Activated CD4-positive, alpha-beta memory T cell treated with anti-CD3 and anti-CD28 coated beads for 36 hours (primary cell): ENCODE measurements at regions of chr14 and their contacts with region 1.

Region 1: GRCh38 chr14:22589096-22589839 is at the start of gene DAD1:
- DNase-seq: peak; percentile 100
- H3K4me3 Mint-ChIP-seq: peak within 1 kb of the TSS; percentile 99
- H3K27ac Mint-ChIP-seq: peak within 1 kb of the TSS; percentile 100
- H3K4me1 Mint-ChIP-seq: peaks cover 64% of the 10 kb centered on the region
- H3K27me3 Mint-ChIP-seq: peaks cover 5% of the 10 kb centered on the region
- total RNA-seq, gene DAD1: 292 to 305 TPM

Region 2: GRCh38 chr14:22653012-22653621 is 63.8 kb after region 1 on chr14:
- CTCF ChIA-PET with region 1: interaction called, 28 read pairs
- POLR2A ChIA-PET with region 1: interaction called, 4 read pairs
- intact Hi-C with region 1: loop called (anchors 5 kb)
- DNase-seq: peak; percentile 66
- H3K4me3 Mint-ChIP-seq: no peak overlapping the region
- H3K27ac Mint-ChIP-seq: no peak overlapping the region
- H3K4me1 Mint-ChIP-seq: no peaks in the 10 kb centered on the region
- H3K27me3 Mint-ChIP-seq: no peaks in the 10 kb centered on the region

Region 3: DNA sequence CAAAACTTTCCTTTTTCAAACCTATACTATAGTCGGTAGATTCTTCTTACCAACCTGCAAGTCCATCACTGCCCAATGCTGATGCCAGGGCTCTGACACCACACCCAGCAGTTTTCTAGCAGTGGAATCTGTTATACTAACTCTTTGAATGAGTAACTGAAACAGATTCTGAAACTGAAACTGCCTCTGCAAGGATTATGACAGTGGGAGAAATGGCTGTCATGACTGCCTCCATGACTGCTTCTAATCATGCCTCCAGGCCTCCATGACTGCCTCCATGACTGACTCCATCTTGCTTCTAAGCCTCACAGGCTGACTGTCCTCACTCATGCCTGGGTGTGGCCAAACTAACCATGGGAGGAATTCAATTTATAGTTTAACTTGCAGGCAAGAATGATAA is 147.8 kb after region 1 on chr14:
- CTCF ChIA-PET with region 1: no interaction called
- POLR2A ChIA-PET with region 1: no interaction called
- intact Hi-C with region 1: loop called (anchors 1 kb)
- DNase-seq: peak; percentile 76
- H3K4me3 Mint-ChIP-seq: no peak overlapping the region
- H3K27ac Mint-ChIP-seq: peak overlapping the region; percentile 63
- H3K4me1 Mint-ChIP-seq: peaks cover 16% of the 10 kb centered on the region
- H3K27me3 Mint-ChIP-seq: no peaks in the 10 kb centered on the region

Region 4: GRCh38 chr14:23621204-23621931 is 1032.1 kb after region 1 on chr14:
- CTCF ChIA-PET with region 1: no interaction called
- POLR2A ChIA-PET with region 1: no interaction called
- intact Hi-C with region 1: no loop called
- DNase-seq: no peak
- H3K4me3 Mint-ChIP-seq: no peak overlapping the region
- H3K27ac Mint-ChIP-seq: no peak overlapping the region
- H3K4me1 Mint-ChIP-seq: no peaks in the 10 kb centered on the region
- H3K27me3 Mint-ChIP-seq: peaks cover 7% of the 10 kb centered on the region